CD4-positive, alpha-beta T cell (primary cell): ENCODE measurements at regions of chrX and their contacts with region 1.

Region 1: GRCh38 chrX:123976706-123977316 is 15.3 kb downstream of the STAG2 start:
- DNase-seq: peak in 3 of 14 experiments; percentile 30 to 49 (median 47)
- ATAC-seq: peak; percentile 70
- H3K4me3 ChIP-seq: no peak overlapping the region
- H3K4me3 Mint-ChIP-seq: peak overlapping the region; percentile 37
- H3K27ac ChIP-seq: no peak overlapping the region
- H3K27ac Mint-ChIP-seq: peak overlapping the region; percentile 62
- H3K4me1 ChIP-seq: peaks cover 17% of the 10 kb centered on the region
- H3K4me1 Mint-ChIP-seq: peaks cover 65% of the 10 kb centered on the region
- H3K27me3 ChIP-seq: no peaks in the 10 kb centered on the region
- H3K27me3 Mint-ChIP-seq: no peaks in the 10 kb centered on the region
- CTCF ChIP-seq: no peak

Region 2: DNA sequence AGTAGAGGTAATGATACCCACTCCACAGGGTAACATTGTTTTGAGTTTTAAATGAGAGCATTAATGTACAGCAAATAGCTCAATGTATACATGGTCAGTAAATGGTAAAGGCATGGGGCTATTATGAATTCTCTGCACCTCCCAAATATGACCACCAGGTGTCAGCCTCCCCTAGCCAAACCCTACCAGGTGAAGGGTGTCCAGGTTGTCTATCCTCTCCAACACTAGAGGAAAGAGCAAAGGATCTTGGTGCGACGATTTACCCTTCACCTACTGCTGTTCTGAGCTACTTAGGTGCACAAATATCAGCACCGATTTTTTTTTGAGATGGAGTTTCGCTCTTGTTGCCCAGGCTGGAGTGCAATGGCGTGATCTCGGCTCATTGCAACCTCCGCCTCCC is 143.4 kb before region 1 on chrX:
- CTCF ChIA-PET with region 1: no interaction called
- POLR2A ChIA-PET with region 1: no interaction called
- intact Hi-C with region 1: loop called in 1 of 2 experiments (anchors 1 kb)
- DNase-seq: peak; percentile 22 to 76 (median 46)
- ATAC-seq: peak; percentile 94
- H3K4me3 ChIP-seq: no peak overlapping the region
- H3K4me3 Mint-ChIP-seq: no peak overlapping the region
- H3K27ac ChIP-seq: no peak overlapping the region
- H3K27ac Mint-ChIP-seq: no peak overlapping the region
- H3K4me1 ChIP-seq: no peaks in the 10 kb centered on the region
- H3K4me1 Mint-ChIP-seq: no peaks in the 10 kb centered on the region
- H3K27me3 ChIP-seq: no peaks in the 10 kb centered on the region
- H3K27me3 Mint-ChIP-seq: peaks cover 3% of the 10 kb centered on the region
- CTCF ChIP-seq: peak; percentile 61

Region 3: GRCh38 chrX:123884809-123885408 is 91.9 kb before region 1 on chrX:
- CTCF ChIA-PET with region 1: no interaction called
- POLR2A ChIA-PET with region 1: no interaction called
- intact Hi-C with region 1: loop called in 1 of 2 experiments (anchors 5 kb)
- DNase-seq: peak in 7 of 14 experiments; percentile 2 to 72 (median 43)
- ATAC-seq: peak; percentile 73
- H3K4me3 ChIP-seq: no peak overlapping the region
- H3K4me3 Mint-ChIP-seq: no peak overlapping the region
- H3K27ac ChIP-seq: no peak overlapping the region
- H3K27ac Mint-ChIP-seq: peak overlapping the region; percentile 36
- H3K4me1 ChIP-seq: no peaks in the 10 kb centered on the region
- H3K4me1 Mint-ChIP-seq: peaks cover 12% of the 10 kb centered on the region
- H3K27me3 ChIP-seq: no peaks in the 10 kb centered on the region
- H3K27me3 Mint-ChIP-seq: no peaks in the 10 kb centered on the region
- CTCF ChIP-seq: peak; percentile 68

Region 4: DNA sequence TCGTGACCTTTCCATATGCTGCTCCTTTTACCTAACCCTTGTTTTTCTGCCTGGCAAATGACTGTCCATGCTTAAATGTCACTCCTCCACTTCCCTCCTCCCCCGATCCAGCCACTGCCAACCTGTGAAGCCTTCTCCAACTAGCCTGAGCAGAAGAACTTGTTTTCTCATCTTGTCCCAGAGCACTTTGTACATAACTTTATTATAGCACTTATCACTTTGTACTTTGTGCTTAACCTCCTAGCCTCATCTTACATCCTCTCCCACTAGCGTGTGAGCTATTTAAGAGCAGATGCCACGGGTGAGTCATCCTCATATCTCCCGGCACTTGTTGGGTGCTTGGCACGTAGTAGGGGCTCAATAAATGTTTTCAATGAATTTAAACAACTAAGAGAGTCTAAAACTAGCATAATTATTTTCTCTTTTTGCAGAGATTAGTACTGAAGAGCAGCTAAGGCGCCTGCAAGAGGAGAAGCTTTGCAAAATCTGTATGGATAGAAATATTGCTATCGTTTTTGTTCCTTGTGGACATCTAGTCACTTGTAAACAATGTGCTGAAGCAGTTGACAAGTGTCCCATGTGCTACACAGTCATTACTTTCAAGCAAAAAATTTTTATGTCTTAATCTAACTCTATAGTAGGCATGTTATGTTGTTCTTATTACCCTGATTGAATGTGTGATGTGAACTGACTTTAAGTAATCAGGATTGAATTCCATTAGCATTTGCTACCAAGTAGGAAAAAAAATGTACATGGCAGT is 70.1 kb before region 1 on chrX:
- CTCF ChIA-PET with region 1: no interaction called
- POLR2A ChIA-PET with region 1: no interaction called
- intact Hi-C with region 1: no loop called
- DNase-seq: no peak
- ATAC-seq: no peak
- H3K4me3 ChIP-seq: no peak overlapping the region
- H3K4me3 Mint-ChIP-seq: no peak overlapping the region
- H3K27ac ChIP-seq: no peak overlapping the region
- H3K27ac Mint-ChIP-seq: peak overlapping the region; percentile 11
- H3K4me1 ChIP-seq: peaks cover 3% of the 10 kb centered on the region
- H3K4me1 Mint-ChIP-seq: peaks cover 27% of the 10 kb centered on the region
- H3K27me3 ChIP-seq: no peaks in the 10 kb centered on the region
- H3K27me3 Mint-ChIP-seq: no peaks in the 10 kb centered on the region
- CTCF ChIP-seq: no peak

Region 5: DNA sequence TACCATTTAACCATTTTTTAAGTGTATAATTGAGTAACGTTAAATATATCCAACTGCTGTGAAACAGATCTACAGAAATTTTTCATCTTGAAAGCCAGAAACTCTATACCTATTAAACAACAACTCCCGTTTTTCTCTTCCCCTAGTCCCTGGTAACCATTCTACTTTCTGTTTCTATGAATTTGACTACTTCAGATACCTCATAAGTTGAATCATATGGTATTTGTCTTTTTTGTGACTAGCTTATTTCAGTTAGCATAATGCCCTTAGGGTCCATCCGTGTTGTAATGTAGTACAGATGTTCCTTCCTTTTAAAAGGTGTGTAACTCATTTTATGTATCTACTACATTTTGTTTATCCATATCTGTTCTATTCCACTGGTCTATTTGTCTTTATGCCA is 33.3 kb after region 1 on chrX:
- CTCF ChIA-PET with region 1: no interaction called
- POLR2A ChIA-PET with region 1: no interaction called
- intact Hi-C with region 1: loop called (anchors 5 kb)
- DNase-seq: peak in 1 of 14 experiments; percentile 2
- ATAC-seq: no peak
- H3K4me3 ChIP-seq: no peak overlapping the region
- H3K4me3 Mint-ChIP-seq: peak overlapping the region; percentile 36
- H3K27ac ChIP-seq: no peak overlapping the region
- H3K27ac Mint-ChIP-seq: peak overlapping the region; percentile 82
- H3K4me1 ChIP-seq: peaks cover 9% of the 10 kb centered on the region
- H3K4me1 Mint-ChIP-seq: peaks cover 90% of the 10 kb centered on the region
- H3K27me3 ChIP-seq: no peaks in the 10 kb centered on the region
- H3K27me3 Mint-ChIP-seq: no peaks in the 10 kb centered on the region
- CTCF ChIP-seq: no peak